Heart right ventricle (tissue), 16 donors: ENCODE measurements at regions of chr3 and their contacts with region 1.

Region 1: DNA sequence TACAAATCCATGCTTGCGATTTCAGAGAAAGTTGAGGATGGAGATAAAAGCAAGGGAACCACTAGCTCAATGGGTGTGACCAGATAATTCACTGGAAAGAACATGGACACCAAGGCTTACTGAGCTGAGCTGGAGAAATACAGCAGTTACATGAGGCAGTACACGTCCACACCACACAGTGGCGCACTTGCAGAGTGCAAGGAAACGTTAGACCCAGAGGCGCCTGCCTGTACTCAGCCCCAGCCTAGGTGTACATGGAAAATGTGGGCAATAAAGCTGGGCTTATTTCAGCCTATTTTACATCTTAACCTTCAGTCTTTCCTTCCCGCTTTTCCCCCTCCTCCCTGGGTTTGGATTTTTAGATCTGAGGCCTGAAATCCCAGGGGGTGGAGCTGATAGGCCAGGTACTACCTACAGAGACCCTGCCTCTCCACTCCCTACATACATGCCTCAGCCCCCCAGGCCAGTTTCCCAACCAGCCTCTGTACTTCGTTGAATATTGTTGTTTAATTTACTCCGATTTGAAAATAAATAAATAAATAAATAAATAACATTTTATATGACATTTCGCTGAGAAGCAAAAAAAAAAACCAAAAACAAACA is 60.1 kb downstream of the PCOLCE2 start:
- DNase-seq: peak; percentile 71 to 80
- ATAC-seq: peak; percentile 87 to 95 (median 92)
- H3K4me3 ChIP-seq: no peak overlapping the region
- H3K27ac ChIP-seq: no peak overlapping the region
- H3K4me1 ChIP-seq: no peaks in the 10 kb centered on the region
- H3K27me3 ChIP-seq: no peaks in the 10 kb centered on the region
- CTCF ChIP-seq: peak; percentile 63 to 89 (median 82)

Region 2: DNA sequence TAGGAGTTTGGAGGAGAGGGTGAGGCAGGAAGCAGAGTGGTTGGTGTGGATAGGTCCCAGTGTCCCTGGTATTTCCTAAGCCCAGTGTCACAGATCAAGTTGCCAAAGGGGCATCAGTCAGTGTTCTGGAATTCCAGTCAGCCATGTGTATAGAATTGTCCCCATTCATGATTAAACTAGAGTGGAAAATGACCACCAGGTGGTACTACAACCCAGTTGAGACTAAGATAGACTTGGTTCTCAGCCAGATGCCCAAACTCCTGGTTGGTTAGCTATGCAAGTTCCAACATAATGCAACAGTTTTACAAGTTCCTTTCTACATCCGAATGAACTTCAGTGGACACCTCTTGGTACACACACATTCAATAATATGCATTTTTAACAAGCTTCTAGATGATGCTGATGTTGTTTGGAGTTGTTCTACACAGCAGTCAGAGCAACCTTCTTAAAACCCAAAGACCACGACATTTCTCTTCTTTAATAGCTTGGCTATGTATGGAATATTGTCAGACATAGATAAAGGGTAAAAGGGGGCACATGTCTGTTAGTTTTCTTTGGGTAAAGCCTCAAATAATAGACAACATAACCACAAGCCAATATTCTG is 241.9 kb before region 1 on chr3:
- intact Hi-C with region 1: loop called in 7 of 10 experiments (anchors 10 kb)
- DNase-seq: peak in 1 of 2 donors; percentile 40
- ATAC-seq: peak in 7 of 8 donors; percentile 64 to 82 (median 68)
- H3K4me3 ChIP-seq: no peak overlapping the region
- H3K27ac ChIP-seq: no peak overlapping the region
- H3K4me1 ChIP-seq: peaks cover 0 to 6% (median 0%) of the 10 kb centered on the region in 9 donors
- H3K27me3 ChIP-seq: peaks cover 0 to 4% (median 0%) of the 10 kb centered on the region in 7 donors
- CTCF ChIP-seq: peak; percentile 39 to 73 (median 61)

Region 3: GRCh38 chr3:142929109-142929508 is 100.3 kb after region 1 on chr3:
- intact Hi-C with region 1: loop called in 1 of 10 experiments (anchors 5 kb)
- DNase-seq: peak; percentile 21 to 28
- ATAC-seq: peak in 5 of 8 donors; percentile 50 to 73 (median 68)
- H3K4me3 ChIP-seq: no peak overlapping the region
- H3K27ac ChIP-seq: no peak overlapping the region
- H3K4me1 ChIP-seq: peaks cover 0 to 4% (median 0%) of the 10 kb centered on the region in 9 donors
- H3K27me3 ChIP-seq: no peaks in the 10 kb centered on the region
- CTCF ChIP-seq: peak in 7 of 9 donors; percentile 41 to 61 (median 57)

Region 4: GRCh38 chr3:142976621-142977398 is 148.0 kb after region 1 on chr3:
- intact Hi-C with region 1: loop called in 1 of 10 experiments (anchors 5 kb)
- DNase-seq: peak; percentile 84 to 85
- ATAC-seq: peak; percentile 73 to 92 (median 85)
- H3K4me3 ChIP-seq: no peak overlapping the region
- H3K27ac ChIP-seq: peak overlapping the region in 8 of 10 donors; percentile 53 to 89 (median 76)
- H3K4me1 ChIP-seq: peaks cover 4 to 48% (median 29%) of the 10 kb centered on the region in 9 donors
- H3K27me3 ChIP-seq: no peaks in the 10 kb centered on the region
- CTCF ChIP-seq: no peak

Region 5: DNA sequence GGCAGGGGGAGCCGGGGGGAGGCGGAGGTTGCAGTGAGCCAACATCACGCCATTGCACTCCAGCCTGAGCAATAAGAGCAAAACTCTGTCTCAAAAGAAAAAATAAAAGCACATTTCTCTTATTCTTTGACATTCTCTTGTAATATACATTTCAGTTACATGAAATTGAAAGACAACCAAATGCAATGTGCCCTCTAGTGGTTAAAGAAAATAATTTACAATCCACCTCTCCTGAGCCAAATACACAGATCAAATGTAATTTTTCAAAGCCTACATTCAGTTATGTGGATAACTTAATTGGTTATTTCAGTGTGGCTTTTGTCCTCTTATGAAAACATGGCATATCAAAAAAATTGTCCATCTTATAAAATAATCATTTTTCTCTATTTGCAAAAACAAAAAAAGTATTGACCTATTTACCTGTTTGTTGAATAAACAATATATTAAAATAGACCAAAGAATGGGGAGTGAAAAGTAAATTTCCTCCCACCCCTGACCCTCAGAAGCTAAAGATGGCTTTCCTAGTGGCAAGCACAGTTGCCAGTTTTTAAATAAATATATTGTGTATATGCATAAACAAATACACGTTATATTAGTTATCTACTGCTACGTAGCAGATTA is 158.4 kb after region 1 on chr3:
- intact Hi-C with region 1: loop called in 6 of 10 experiments (anchors 2 to 5 kb)
- DNase-seq: no peak
- ATAC-seq: peak in 5 of 8 donors; percentile 40 to 70 (median 67)
- H3K4me3 ChIP-seq: peak overlapping the region in 3 of 10 donors; percentile 0 to 5 (median 2)
- H3K27ac ChIP-seq: peak overlapping the region in 8 of 10 donors; percentile 9 to 68 (median 60)
- H3K4me1 ChIP-seq: peaks cover 0 to 15% (median 0%) of the 10 kb centered on the region in 9 donors
- H3K27me3 ChIP-seq: no peaks in the 10 kb centered on the region
- CTCF ChIP-seq: peak; percentile 39 to 81 (median 71)

Region 6: GRCh38 chr3:142993958-142994442 is 165.2 kb after region 1 on chr3:
- intact Hi-C with region 1: loop called in 9 of 10 experiments (anchors 1 to 5 kb)
- DNase-seq: peak; percentile 38 to 44
- ATAC-seq: peak in 4 of 8 donors; percentile 34 to 62 (median 52)
- H3K4me3 ChIP-seq: no peak overlapping the region
- H3K27ac ChIP-seq: no peak overlapping the region
- H3K4me1 ChIP-seq: peaks cover 0 to 16% (median 0%) of the 10 kb centered on the region in 9 donors
- H3K27me3 ChIP-seq: no peaks in the 10 kb centered on the region
- CTCF ChIP-seq: peak; percentile 48 to 79 (median 71)

Region 7: GRCh38 chr3:143001369-143002082 is 172.7 kb after region 1 on chr3 and contains the start of gene U2SURP:
- intact Hi-C with region 1: loop called in 1 of 10 experiments (anchors 5 kb)
- DNase-seq: peak; percentile 93 to 98
- ATAC-seq: peak; percentile 94 to 99 (median 96)
- H3K4me3 ChIP-seq: peak within 1 kb of the TSS; percentile 62 to 91 (median 77)
- H3K27ac ChIP-seq: peak within 1 kb of the TSS; percentile 52 to 94 (median 89)
- H3K4me1 ChIP-seq: peaks cover 0 to 66% (median 56%) of the 10 kb centered on the region in 9 donors
- H3K27me3 ChIP-seq: no peaks in the 10 kb centered on the region
- CTCF ChIP-seq: peak in 4 of 9 donors; percentile 5 to 16 (median 10)
- total RNA-seq, gene U2SURP: 35.8 to 49.3 (median 40.2) TPM

Region 8: DNA sequence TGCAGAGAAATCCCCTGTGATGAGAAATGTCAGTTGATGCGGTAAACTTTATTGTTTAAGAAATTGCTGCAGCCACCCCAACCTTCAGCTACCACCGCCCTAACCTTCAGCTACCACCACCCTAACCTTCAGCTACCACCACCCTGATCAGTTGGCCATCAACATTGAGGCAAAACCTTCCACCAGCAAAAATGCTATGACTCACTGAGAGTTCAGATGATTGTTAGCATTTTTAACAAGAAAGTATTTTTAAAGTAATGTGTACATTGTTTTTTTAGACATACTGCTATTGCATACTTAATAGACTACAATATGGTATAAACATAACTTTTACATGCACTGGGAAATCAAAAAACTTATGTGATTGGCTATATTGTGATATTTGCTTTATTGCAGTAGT is 202.5 kb after region 1 on chr3:
- intact Hi-C with region 1: no loop called
- DNase-seq: no peak
- ATAC-seq: no peak
- H3K4me3 ChIP-seq: no peak overlapping the region
- H3K27ac ChIP-seq: no peak overlapping the region
- H3K4me1 ChIP-seq: peaks cover 0 to 12% (median 0%) of the 10 kb centered on the region in 9 donors
- H3K27me3 ChIP-seq: no peaks in the 10 kb centered on the region
- CTCF ChIP-seq: no peak